Naive thymus-derived CD4-positive, alpha-beta T cell (primary cell): ENCODE measurements at regions of chr7 and their contacts with region 1.

Region 1: DNA sequence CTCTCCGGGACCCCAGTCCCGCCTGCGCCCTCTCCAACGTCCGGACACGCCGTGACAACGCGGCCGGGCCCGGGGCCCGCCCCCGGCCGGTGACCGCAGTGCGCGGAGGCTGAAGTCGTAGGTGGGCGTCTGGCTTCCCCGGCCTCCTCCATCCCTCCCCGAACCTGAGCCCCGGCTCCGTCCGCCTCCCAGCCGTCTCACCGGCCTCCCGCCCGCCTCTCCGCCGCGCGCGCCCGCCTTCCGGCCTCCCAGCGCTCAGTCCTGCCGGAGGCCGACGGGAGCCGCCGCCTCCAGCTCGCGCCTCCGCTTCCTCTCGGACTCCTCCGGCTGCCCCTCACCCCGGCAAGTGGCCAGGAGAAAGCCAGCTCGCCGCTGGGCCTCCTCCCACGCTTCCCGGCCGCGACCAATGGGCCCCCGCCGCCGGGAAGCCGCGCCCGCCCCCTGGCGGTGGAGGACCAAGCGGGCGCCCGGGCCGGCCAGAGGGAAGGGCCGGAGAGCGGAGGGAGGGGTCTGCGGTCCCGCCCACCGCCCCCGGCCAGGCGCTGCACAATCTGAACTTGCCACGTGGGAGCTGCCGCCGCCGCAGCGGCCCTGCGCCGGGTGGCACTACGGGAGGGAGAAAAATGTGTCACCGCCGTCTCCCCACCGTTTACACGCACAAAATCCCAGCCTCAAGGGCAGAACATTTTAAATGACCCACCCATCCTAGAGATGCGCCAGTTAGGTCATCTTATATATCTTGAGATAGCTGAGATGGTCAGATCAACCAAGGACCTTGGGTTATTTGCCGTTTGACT is at the start of gene FAM3C:
- DNase-seq: peak; percentile 51 to 98 (median 65)
- ATAC-seq: peak; percentile 95
- H3K4me3 ChIP-seq: peak within 1 kb of the TSS; percentile 72
- H3K4me3 Mint-ChIP-seq: peak within 1 kb of the TSS; percentile 82 to 93 (median 88)
- H3K27ac ChIP-seq: peak within 1 kb of the TSS; percentile 78
- H3K27ac Mint-ChIP-seq: peak within 1 kb of the TSS; percentile 36 to 92 (median 84)
- H3K4me1 ChIP-seq: peaks cover 0 to 3% of the 10 kb centered on the region in 2 donors
- H3K4me1 Mint-ChIP-seq: peaks cover 14 to 44% (median 34%) of the 10 kb centered on the region in 7 donors
- H3K27me3 ChIP-seq: no peaks in the 10 kb centered on the region
- H3K27me3 Mint-ChIP-seq: no peaks in the 10 kb centered on the region
- total RNA-seq, gene FAM3C: 11.1 to 28.4 (median 21.0) TPM

Region 2: DNA sequence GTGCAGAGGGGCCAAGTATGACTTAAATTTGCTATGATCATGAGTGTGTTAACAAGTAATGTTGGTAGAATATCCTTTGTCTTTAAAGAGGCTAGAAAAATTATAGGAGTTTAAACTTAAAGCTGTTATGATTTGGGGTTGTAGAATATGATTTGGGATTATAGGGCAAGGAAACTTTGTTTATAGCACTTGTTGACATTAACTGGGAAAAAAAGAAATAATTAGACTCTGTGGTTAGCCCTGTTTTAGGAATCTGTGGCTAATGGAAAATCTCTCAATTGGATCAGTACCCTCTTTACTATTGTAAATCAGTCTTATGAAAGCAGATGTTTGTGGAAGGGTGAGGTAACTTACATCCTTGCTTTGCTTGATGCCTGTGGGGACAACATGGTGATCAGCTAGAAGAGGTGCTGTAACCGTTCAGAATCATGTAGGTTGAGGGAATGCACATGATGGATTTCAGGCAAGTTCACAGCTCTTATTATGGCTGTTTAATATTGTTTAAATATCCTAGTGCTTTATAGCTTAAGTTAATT is 434.5 kb before region 1 on chr7:
- CTCF ChIA-PET with region 1: no interaction called
- POLR2A ChIA-PET with region 1: no interaction called
- intact Hi-C with region 1: no loop called
- DNase-seq: no peak
- ATAC-seq: no peak
- H3K4me3 ChIP-seq: no peak overlapping the region
- H3K4me3 Mint-ChIP-seq: no peak overlapping the region
- H3K27ac ChIP-seq: no peak overlapping the region
- H3K27ac Mint-ChIP-seq: peak overlapping the region in 2 of 9 donors; percentile 8 to 10
- H3K4me1 ChIP-seq: no peaks in the 10 kb centered on the region
- H3K4me1 Mint-ChIP-seq: peaks cover 3 to 48% (median 31%) of the 10 kb centered on the region in 7 donors
- H3K27me3 ChIP-seq: no peaks in the 10 kb centered on the region
- H3K27me3 Mint-ChIP-seq: no peaks in the 10 kb centered on the region

Region 3: DNA sequence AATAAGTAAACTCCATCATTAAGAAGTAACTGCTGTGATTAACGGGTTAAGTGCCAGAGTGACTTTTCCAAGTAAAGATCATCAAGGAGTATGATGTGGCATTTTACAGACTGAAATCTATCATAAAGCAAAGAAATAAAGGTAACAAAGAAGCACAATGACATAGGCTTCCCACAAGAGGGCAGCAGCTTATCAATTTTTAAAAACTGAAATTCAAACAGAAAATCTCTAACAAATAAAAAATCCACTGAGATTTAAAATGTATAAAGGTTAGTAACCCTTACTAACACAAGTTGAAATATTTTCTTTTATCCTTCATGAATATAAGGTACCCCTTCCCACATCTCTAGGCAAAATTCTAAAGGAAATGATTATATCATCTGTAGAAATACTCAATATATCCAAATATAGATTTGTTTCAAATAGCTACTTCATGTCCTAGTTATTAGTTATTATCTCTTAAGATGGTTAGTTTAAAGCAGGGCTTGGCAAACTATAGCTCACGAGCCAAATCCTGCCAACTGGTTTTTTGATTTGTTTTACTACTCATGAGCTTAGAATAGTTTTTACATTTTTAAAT is 29.2 kb before region 1 on chr7:
- CTCF ChIA-PET with region 1: interaction called, 32 read pairs
- POLR2A ChIA-PET with region 1: interaction called, 3 read pairs
- intact Hi-C with region 1: loop called (anchors 1 kb)
- DNase-seq: peak in 6 of 9 donors; percentile 26 to 61 (median 57)
- ATAC-seq: peak; percentile 67
- H3K4me3 ChIP-seq: no peak overlapping the region
- H3K4me3 Mint-ChIP-seq: no peak overlapping the region
- H3K27ac ChIP-seq: no peak overlapping the region
- H3K27ac Mint-ChIP-seq: peak overlapping the region in 3 of 9 donors; percentile 45 to 69 (median 47)
- H3K4me1 ChIP-seq: no peaks in the 10 kb centered on the region
- H3K4me1 Mint-ChIP-seq: peaks cover 0 to 39% (median 4%) of the 10 kb centered on the region in 7 donors
- H3K27me3 ChIP-seq: no peaks in the 10 kb centered on the region
- H3K27me3 Mint-ChIP-seq: no peaks in the 10 kb centered on the region

Region 4: DNA sequence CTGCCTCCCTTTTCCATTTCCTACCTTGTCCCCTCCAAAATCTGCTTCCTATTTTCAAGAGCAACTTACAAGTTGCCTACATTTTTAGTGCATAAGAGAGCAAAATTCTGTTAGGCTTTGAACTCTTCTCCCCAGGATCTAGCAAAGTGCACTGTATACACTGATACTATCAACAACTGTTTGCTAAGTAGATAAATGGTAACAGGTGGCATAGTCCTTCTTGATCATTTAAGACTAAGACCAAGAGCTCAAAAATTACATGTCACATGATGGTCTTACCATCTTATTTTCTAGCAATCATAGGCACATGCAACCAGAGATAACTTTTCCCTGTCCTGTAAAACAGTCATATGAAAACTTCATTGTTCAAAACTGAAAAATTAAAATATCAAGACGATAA is 16.2 kb before region 1 on chr7:
- CTCF ChIA-PET with region 1: interaction called, 26 read pairs
- POLR2A ChIA-PET with region 1: interaction called, 4 read pairs
- intact Hi-C with region 1: loop called (anchors 1 kb)
- DNase-seq: no peak
- ATAC-seq: no peak
- H3K4me3 ChIP-seq: no peak overlapping the region
- H3K4me3 Mint-ChIP-seq: no peak overlapping the region
- H3K27ac ChIP-seq: no peak overlapping the region
- H3K27ac Mint-ChIP-seq: peak overlapping the region in 1 of 9 donors; percentile 56
- H3K4me1 ChIP-seq: peaks cover 0 to 17% of the 10 kb centered on the region in 2 donors
- H3K4me1 Mint-ChIP-seq: peaks cover 18 to 46% (median 28%) of the 10 kb centered on the region in 7 donors
- H3K27me3 ChIP-seq: no peaks in the 10 kb centered on the region
- H3K27me3 Mint-ChIP-seq: no peaks in the 10 kb centered on the region

Region 5: DNA sequence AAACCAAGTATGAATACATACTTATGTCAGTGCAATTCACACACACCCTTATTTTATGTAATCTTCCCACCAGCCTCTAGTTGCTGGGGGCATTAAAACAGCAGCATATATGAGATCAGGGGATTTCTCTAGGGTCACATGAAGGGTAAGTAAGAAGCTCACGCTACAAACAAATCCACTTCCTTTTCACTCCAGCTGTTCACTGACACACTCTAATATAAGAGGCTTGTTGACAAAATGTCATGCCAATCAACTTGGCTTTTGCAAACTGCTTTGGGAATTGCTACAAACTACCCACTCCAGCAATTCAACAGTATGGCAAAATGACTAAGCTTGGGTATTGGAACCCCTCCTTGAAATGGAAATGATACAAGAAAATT is 10.4 kb before region 1 on chr7:
- CTCF ChIA-PET with region 1: interaction called, 26 read pairs
- POLR2A ChIA-PET with region 1: interaction called, 11 read pairs
- intact Hi-C with region 1: loop called (anchors 1 kb)
- DNase-seq: peak in 3 of 9 donors; percentile 15 to 51 (median 39)
- ATAC-seq: peak; percentile 83
- H3K4me3 ChIP-seq: no peak overlapping the region
- H3K4me3 Mint-ChIP-seq: peak overlapping the region in 5 of 10 donors; percentile 23 to 47 (median 35)
- H3K27ac ChIP-seq: no peak overlapping the region
- H3K27ac Mint-ChIP-seq: peak overlapping the region in 4 of 9 donors; percentile 16 to 74 (median 32)
- H3K4me1 ChIP-seq: peaks cover 6 to 39% of the 10 kb centered on the region in 2 donors
- H3K4me1 Mint-ChIP-seq: peaks cover 25 to 84% (median 73%) of the 10 kb centered on the region in 7 donors
- H3K27me3 ChIP-seq: no peaks in the 10 kb centered on the region
- H3K27me3 Mint-ChIP-seq: no peaks in the 10 kb centered on the region

Region 6: DNA sequence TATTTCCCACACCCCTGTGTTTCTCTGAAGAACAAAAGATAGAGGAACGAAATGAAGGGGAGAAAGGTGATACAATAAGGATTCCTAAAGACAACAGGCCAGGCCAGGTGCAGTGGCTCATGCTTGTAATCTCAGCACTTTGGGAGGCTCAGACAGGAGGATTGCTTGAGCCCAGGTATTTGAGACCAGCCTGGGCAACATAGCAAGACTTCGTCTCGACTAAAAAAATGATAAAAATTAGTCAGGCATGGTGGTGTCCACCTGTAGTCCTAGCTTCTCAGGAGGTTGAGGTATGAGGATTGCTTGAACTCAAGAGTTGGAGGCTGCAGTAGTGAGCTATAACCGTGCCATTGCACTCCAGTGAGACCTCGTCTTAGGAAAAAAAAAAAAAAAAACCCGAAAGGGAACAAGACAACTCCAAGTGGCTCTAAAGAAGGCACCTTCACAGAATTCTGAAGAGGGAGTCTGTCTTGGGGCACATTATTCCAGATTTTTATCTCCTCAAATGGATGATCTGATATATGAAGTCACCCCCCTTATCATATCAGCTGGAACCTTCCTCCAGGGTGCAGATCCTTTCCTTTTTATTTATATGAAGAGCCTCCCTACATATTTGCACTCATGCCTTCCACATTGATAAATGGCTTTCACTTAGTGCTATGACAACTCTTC is 41.4 kb after region 1 on chr7:
- CTCF ChIA-PET with region 1: interaction called, 26 read pairs
- POLR2A ChIA-PET with region 1: interaction called, 11 read pairs
- intact Hi-C with region 1: loop called (anchors 1 kb)
- DNase-seq: no peak
- ATAC-seq: no peak
- H3K4me3 ChIP-seq: peak overlapping the region; percentile 50
- H3K4me3 Mint-ChIP-seq: peak overlapping the region in 9 of 10 donors; percentile 74 to 88 (median 80)
- H3K27ac ChIP-seq: peak overlapping the region; percentile 46
- H3K27ac Mint-ChIP-seq: peak overlapping the region; percentile 91 to 98 (median 96)
- H3K4me1 ChIP-seq: peaks cover 20 to 25% of the 10 kb centered on the region in 2 donors
- H3K4me1 Mint-ChIP-seq: peaks cover 12 to 53% (median 42%) of the 10 kb centered on the region in 7 donors
- H3K27me3 ChIP-seq: no peaks in the 10 kb centered on the region
- H3K27me3 Mint-ChIP-seq: no peaks in the 10 kb centered on the region

Region 7: DNA sequence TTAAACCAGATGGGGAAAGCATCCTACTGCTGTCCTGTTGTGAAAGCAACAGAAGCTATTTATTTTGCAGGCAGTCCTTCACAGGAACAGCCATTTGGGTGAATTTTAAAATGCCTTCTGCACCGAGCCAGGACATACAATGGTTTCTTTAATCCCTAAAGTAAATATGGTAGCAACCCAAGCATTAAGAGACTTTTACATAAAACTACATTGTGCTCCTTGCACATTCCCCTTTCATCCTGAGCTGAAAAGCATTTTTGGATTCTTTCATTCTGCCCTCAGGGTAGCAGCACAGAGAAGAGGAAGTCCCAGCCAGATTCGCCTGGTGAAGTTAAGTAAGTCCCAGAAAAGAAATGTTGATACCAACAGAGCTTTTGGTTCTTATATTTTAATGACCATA is 83.9 kb after region 1 on chr7:
- CTCF ChIA-PET with region 1: no interaction called
- POLR2A ChIA-PET with region 1: no interaction called
- intact Hi-C with region 1: loop called in 1 of 2 experiments (anchors 5 kb)
- DNase-seq: no peak
- ATAC-seq: no peak
- H3K4me3 ChIP-seq: no peak overlapping the region
- H3K4me3 Mint-ChIP-seq: no peak overlapping the region
- H3K27ac ChIP-seq: no peak overlapping the region
- H3K27ac Mint-ChIP-seq: no peak overlapping the region
- H3K4me1 ChIP-seq: no peaks in the 10 kb centered on the region
- H3K4me1 Mint-ChIP-seq: peaks cover 2 to 7% (median 6%) of the 10 kb centered on the region in 7 donors
- H3K27me3 ChIP-seq: no peaks in the 10 kb centered on the region
- H3K27me3 Mint-ChIP-seq: no peaks in the 10 kb centered on the region

Region 8: DNA sequence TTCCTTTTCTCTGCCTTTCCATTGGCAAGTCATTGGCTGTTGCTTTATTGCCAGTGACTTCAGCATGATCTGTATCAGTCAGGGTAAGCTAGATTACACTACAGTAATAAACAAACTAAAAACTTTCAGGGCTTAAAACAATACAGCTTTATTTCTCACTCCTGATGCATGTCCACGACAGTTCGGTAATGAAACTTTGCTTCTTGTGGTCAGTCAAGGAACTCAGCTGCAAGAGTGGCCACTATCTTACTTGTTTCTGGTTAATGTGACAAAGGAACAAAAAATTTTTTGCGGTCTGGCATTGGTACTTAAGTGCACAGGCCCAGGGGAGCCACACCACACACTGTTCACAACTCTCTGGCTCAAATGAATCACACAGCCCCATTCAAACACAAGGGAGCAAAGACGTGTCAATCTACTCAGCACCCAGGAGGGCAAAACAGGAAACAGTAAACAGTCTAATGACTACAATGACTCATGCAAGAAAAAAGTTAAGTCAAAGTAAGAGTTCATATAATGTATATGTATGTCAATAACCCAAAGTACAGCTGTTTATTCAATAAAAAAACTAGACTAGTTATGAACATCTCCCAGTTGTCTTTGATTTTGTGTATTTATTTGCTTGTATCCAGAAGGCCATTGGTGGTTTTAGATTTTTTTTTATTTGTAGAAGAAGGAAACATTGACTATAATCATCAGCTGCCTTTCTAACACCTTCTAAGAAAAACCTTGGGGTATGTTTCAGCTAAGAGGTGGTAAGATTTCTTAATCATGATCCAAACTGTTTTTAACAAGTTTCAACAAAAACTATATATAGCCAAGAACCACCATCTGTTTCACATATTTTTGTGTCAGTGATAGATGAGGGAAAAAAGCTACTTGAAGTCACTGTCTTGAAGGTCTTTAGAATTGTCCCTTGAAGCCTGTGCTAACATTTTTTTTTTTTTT is 134.3 kb after region 1 on chr7:
- CTCF ChIA-PET with region 1: no interaction called
- POLR2A ChIA-PET with region 1: no interaction called
- intact Hi-C with region 1: loop called in 1 of 2 experiments (anchors 1 kb)
- DNase-seq: peak in 1 of 9 donors; percentile 60
- ATAC-seq: peak; percentile 94
- H3K4me3 ChIP-seq: no peak overlapping the region
- H3K4me3 Mint-ChIP-seq: peak overlapping the region in 1 of 10 donors; percentile 54
- H3K27ac ChIP-seq: no peak overlapping the region
- H3K27ac Mint-ChIP-seq: peak overlapping the region in 3 of 9 donors; percentile 3 to 91 (median 51)
- H3K4me1 ChIP-seq: peaks cover 0 to 6% of the 10 kb centered on the region in 2 donors
- H3K4me1 Mint-ChIP-seq: peaks cover 0 to 45% (median 0%) of the 10 kb centered on the region in 7 donors
- H3K27me3 ChIP-seq: no peaks in the 10 kb centered on the region
- H3K27me3 Mint-ChIP-seq: peaks cover 0 to 4% (median 0%) of the 10 kb centered on the region in 5 donors